Heart right ventricle (tissue), 16 donors: ENCODE measurements at regions of chr9 and their contacts with region 1.

Region 1: DNA sequence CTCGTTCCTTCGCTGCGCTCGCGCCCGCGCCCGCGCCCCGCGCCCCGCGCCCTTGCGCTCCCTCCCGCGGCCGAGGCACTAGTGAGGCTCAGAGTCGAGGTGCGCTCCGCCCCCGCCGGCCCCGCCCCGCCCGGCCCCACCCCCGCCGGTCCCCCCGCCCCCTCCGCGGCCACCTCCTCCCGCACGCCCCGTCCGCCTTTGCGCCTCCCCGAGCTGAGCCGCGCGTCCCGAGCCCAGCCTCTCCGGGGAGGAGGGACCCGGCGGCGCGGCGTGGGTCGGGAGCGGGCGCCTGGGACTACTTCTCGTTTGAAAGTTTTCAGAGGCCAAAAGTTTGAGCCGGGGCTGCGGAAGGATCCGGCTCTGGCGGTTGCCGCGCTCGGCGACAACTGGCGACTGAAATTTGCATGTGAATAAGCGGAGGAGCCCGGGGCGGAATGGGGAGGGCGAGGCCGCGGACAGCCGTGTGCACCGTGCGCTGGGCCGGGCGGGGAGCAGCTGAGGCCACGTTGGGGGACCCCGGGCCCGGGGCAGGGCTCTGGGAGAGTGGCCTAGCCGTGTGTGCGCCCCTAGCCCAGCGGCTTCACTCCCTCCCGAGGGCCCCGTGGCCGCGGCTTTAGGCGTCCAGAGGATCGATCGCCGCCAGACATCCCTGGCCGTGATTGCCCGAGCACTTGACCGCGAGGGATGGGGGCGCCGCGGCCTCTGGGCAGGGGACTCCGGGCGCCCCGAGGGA is at the start of gene NOTCH1:
- DNase-seq: peak; percentile 94 to 95
- ATAC-seq: peak; percentile 80 to 87 (median 83)
- H3K4me3 ChIP-seq: peak within 1 kb of the TSS; percentile 64 to 99 (median 96)
- H3K27ac ChIP-seq: peak within 1 kb of the TSS; percentile 94 to 100 (median 98)
- H3K4me1 ChIP-seq: peaks cover 14 to 70% (median 62%) of the 10 kb centered on the region in 9 donors
- H3K27me3 ChIP-seq: no peaks in the 10 kb centered on the region
- CTCF ChIP-seq: peak in 2 of 9 donors; percentile 7 to 36
- total RNA-seq, gene NOTCH1: 12.0 to 27.0 (median 21.8) TPM

Region 2: GRCh38 chr9:136482793-136483588 is 63.1 kb before region 1 on chr9 and contains the start of gene SEC16A:
- intact Hi-C with region 1: loop called in 3 of 10 experiments (anchors 5 to 10 kb)
- DNase-seq: peak; percentile 99 to 100
- ATAC-seq: peak; percentile 83 to 91 (median 87)
- H3K4me3 ChIP-seq: peak within 1 kb of the TSS; percentile 77 to 96 (median 84)
- H3K27ac ChIP-seq: peak within 1 kb of the TSS; percentile 93 to 100 (median 99)
- H3K4me1 ChIP-seq: peaks cover 8 to 50% (median 26%) of the 10 kb centered on the region in 9 donors
- H3K27me3 ChIP-seq: no peaks in the 10 kb centered on the region
- CTCF ChIP-seq: no peak
- total RNA-seq, gene SEC16A: 21.9 to 35.9 (median 28.6) TPM

Region 3: GRCh38 chr9:136499071-136499934 is 46.8 kb before region 1 on chr9:
- intact Hi-C with region 1: no loop called
- DNase-seq: no peak
- ATAC-seq: no peak
- H3K4me3 ChIP-seq: no peak overlapping the region
- H3K27ac ChIP-seq: no peak overlapping the region
- H3K4me1 ChIP-seq: peaks cover 0 to 13% (median 0%) of the 10 kb centered on the region in 9 donors
- H3K27me3 ChIP-seq: no peaks in the 10 kb centered on the region
- CTCF ChIP-seq: no peak

Region 4: DNA sequence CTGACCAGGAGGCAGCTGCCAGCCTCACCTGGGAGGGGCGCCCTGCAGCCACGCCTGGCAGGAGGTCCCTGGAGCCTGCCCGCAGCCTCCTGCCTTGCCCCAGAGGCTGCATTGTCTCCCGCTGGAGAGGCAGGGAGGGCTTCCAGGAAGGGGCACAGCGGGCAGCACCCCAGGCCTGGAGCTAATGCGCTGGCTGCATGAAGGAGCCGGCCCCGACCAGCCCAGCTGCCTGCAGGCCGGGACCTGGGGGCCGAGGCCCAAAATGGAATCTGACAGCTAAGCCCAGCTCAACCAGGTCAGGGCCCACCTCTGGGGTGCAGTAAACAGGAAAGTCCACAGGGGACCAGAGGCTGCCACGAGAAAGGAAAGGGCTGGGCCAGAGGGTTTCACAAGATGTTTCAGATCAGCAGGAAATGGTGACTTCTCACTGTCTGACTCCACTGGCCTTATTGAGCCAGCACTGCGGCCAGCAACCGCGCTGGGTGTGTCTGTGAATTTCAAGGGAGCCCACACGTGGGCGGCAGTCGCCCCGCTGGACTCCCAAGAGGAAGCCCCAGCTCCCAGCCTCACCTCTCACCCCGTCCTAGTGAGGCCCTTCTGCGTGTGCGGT is 18.4 kb after region 1 on chr9:
- intact Hi-C with region 1: loop called in 3 of 10 experiments (anchors 2 kb)
- DNase-seq: peak; percentile 69 to 73
- ATAC-seq: peak; percentile 40 to 73 (median 58)
- H3K4me3 ChIP-seq: peak overlapping the region in 5 of 10 donors; percentile 1 to 23 (median 5)
- H3K27ac ChIP-seq: peak overlapping the region; percentile 47 to 92 (median 84)
- H3K4me1 ChIP-seq: peaks cover 46 to 73% (median 70%) of the 10 kb centered on the region in 9 donors
- H3K27me3 ChIP-seq: no peaks in the 10 kb centered on the region
- CTCF ChIP-seq: peak in 5 of 9 donors; percentile 9 to 43 (median 28)

Region 5: GRCh38 chr9:136605988-136606660 is 60.0 kb after region 1 on chr9:
- intact Hi-C with region 1: loop called in 3 of 10 experiments (anchors 5 to 10 kb)
- DNase-seq: peak; percentile 54 to 81
- ATAC-seq: peak in 7 of 8 donors; percentile 8 to 69 (median 56)
- H3K4me3 ChIP-seq: no peak overlapping the region
- H3K27ac ChIP-seq: peak overlapping the region in 8 of 10 donors; percentile 6 to 81 (median 34)
- H3K4me1 ChIP-seq: peaks cover 6 to 47% (median 39%) of the 10 kb centered on the region in 9 donors
- H3K27me3 ChIP-seq: no peaks in the 10 kb centered on the region
- CTCF ChIP-seq: no peak

Region 6: DNA sequence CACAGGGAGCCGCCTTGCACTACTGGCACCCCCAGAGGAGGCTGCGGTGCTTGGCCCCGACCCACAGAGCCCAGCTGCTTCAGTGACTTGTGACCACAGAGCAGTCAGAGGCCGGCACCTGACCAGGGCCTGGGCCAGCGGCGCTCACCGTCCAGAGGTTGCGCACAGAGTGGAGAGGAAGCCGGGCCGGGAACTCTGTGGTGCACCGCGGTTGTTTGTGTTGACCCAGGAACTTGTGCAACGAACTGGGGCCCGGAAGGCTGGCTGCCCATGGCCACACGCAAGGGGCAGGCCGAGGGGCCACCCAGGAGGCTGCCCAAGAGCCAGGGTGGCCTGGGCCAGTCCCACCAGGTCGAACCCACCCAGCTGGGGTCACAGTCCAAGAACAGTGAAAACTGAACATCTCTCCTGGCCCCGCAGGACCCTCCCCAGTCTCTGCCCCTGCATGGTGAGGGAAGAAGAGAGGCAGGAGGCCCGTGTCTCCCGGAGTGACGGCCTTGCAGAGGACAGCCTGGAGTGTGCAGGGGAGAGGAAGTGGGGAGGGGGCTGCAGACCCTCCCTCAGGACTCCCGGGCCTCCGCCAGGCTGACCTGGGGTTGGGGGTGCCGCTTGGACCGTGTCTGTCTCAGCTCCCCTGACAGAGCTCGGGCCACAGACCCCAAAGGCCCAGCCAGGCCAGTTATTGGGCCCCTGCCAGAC is 73.8 kb after region 1 on chr9:
- intact Hi-C with region 1: loop called in 6 of 10 experiments (anchors 1 to 10 kb)
- DNase-seq: peak in 1 of 2 donors; percentile 54
- ATAC-seq: peak; percentile 13 to 24 (median 14)
- H3K4me3 ChIP-seq: no peak overlapping the region
- H3K27ac ChIP-seq: peak overlapping the region in 4 of 10 donors; percentile 26 to 90 (median 51)
- H3K4me1 ChIP-seq: peaks cover 8 to 77% (median 30%) of the 10 kb centered on the region in 9 donors
- H3K27me3 ChIP-seq: no peaks in the 10 kb centered on the region
- CTCF ChIP-seq: no peak

Region 7: GRCh38 chr9:136625101-136626060 is 79.2 kb after region 1 on chr9:
- intact Hi-C with region 1: loop called in 3 of 10 experiments (anchors 1 to 10 kb)
- DNase-seq: peak; percentile 92 to 93
- ATAC-seq: peak; percentile 76 to 91 (median 86)
- H3K4me3 ChIP-seq: no peak overlapping the region
- H3K27ac ChIP-seq: peak overlapping the region in 9 of 10 donors; percentile 20 to 76 (median 66)
- H3K4me1 ChIP-seq: peaks cover 15 to 52% (median 46%) of the 10 kb centered on the region in 9 donors
- H3K27me3 ChIP-seq: peaks cover 0 to 18% (median 0%) of the 10 kb centered on the region in 7 donors
- CTCF ChIP-seq: peak in 8 of 9 donors; percentile 26 to 83 (median 66)

Region 8: GRCh38 chr9:136631038-136632000 is 85.2 kb after region 1 on chr9:
- intact Hi-C with region 1: loop called in 2 of 10 experiments (anchors 5 to 10 kb)
- DNase-seq: peak; percentile 82 to 86
- ATAC-seq: peak; percentile 86 to 95 (median 92)
- H3K4me3 ChIP-seq: no peak overlapping the region
- H3K27ac ChIP-seq: no peak overlapping the region
- H3K4me1 ChIP-seq: peaks cover under 1 to 28% (median 17%) of the 10 kb centered on the region in 9 donors
- H3K27me3 ChIP-seq: peaks cover 0 to 18% (median 0%) of the 10 kb centered on the region in 7 donors
- CTCF ChIP-seq: peak; percentile 75 to 90 (median 87)